ENCODE measurements at regions of chr5 and their contacts with region 1.

Region 1: GRCh38 chr5:36734422-36734821 is 128.0 kb downstream of the SLC1A3 start:
- DNase-seq: no peak
- ATAC-seq: peak in 1 of 2 donors; percentile 51
- H3K4me3 ChIP-seq: no peak overlapping the region
- H3K27ac ChIP-seq: no peak overlapping the region
- H3K4me1 ChIP-seq: no peaks in the 10 kb centered on the region
- H3K27me3 ChIP-seq: no peaks in the 10 kb centered on the region

Region 2: DNA sequence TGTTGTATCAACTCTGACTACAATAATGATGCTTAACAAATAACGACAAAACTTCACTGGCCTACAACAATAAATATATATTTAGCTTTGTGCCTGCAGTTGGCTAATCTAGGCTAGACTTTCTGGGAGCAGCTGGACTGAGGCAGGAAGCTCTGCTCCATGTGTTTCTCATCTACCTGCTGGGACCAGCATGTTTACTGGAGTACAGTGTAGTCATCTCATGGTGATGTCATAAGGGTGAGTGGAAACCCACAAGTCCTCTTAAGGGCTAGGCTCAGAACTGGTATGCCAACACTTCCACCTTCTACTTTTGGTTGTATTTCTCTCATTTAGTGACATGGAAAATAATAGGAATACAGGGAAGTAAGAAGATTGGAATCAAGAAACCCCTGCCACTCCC is 56.4 kb after region 1 on chr5:
- intact Hi-C with region 1: no loop called
- DNase-seq: no peak
- ATAC-seq: no peak
- H3K4me3 ChIP-seq: no peak overlapping the region
- H3K27ac ChIP-seq: no peak overlapping the region
- H3K4me1 ChIP-seq: no peaks in the 10 kb centered on the region
- H3K27me3 ChIP-seq: no peaks in the 10 kb centered on the region

Region 3: GRCh38 chr5:37005946-37006540 is 271.6 kb after region 1 on chr5:
- intact Hi-C with region 1: loop called in 2 of 4 experiments (anchors 5 to 10 kb)
- DNase-seq: no peak
- ATAC-seq: no peak
- H3K4me3 ChIP-seq: no peak overlapping the region
- H3K27ac ChIP-seq: no peak overlapping the region
- H3K4me1 ChIP-seq: no peaks in the 10 kb centered on the region
- H3K27me3 ChIP-seq: no peaks in the 10 kb centered on the region

Region 4: DNA sequence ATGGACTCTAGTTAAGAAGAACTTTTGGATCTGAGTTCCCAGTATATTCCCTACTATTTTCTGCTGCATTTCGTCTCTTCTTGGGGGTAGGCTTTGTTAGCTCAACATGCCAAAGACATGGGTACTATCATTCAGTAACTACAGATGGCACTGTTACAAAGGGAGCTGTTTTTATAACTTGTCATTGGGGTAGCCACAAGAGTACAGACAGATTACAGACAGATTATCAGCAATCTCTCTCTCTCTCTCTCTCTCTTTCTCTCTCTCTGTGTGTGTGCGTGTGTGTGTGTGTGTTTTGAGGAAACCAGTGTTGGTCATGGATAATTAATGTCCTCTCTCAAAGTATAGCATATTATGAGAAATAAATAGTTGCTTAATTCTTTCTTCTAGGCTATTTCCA is 760.8 kb after region 1 on chr5:
- intact Hi-C with region 1: no loop called
- DNase-seq: no peak
- ATAC-seq: no peak
- H3K4me3 ChIP-seq: no peak overlapping the region
- H3K27ac ChIP-seq: no peak overlapping the region
- H3K4me1 ChIP-seq: no peaks in the 10 kb centered on the region
- H3K27me3 ChIP-seq: no peaks in the 10 kb centered on the region

Measured in right cardiac atrium (tissue), 5 donors.